ENCODE measurements at regions of chr5 and their contacts with region 1.

Region 1: GRCh38 chr5:157476702-157477408 is 16.8 kb downstream of the NIPAL4 start:
- DNase-seq: peak; percentile 91
- ATAC-seq: peak; percentile 41
- H3K4me3 ChIP-seq: no peak overlapping the region
- H3K27ac ChIP-seq: no peak overlapping the region
- H3K4me1 ChIP-seq: peaks cover 36% of the 10 kb centered on the region
- H3K27me3 ChIP-seq: no peaks in the 10 kb centered on the region
- CTCF ChIP-seq: peak; percentile 99

Region 2: DNA sequence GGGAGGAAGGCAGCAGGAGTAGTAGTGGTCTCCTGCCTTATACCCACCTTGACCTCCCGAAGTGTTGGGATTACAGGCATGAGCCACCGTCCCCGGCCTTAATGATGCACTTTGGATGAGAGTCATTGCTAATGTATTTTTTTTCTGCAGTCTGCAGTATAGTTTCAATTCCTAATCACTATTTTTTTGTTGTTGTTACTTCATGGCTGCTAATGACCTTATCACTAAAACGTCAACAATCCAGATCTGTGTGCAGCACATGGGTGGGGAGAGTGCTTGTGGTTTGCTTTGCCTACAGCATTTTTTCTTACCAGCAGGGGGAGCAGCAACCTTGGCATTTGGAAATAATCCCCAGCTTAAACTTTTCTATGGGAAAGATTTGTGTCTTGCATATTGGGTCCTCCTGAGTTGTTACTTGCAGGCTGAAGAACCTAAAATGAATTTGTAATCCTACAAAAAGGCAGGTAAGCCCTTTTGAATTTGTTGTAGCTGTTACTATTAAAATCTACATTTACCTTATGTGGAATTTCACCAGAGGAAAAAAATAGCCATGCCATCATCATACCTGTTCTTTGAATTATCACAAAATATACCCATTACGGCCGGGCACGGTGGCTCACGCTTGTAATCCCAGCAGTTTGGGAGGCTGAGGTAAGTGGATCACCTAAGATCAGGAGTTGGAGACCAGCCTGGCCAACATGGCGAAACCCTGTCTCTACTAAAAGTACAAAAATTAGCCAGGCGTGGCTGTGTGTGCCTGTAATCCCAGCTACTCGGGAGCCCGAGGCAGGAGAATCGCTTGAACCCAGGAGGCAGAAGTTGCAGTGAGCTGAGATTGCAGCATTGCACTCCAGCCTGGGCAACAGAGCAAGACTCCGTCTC is 327.9 kb before region 1 on chr5:
- CTCF ChIA-PET with region 1: no interaction called
- POLR2A ChIA-PET with region 1: no interaction called
- intact Hi-C with region 1: loop called (anchors 5 kb)
- DNase-seq: peak; percentile 95
- ATAC-seq: peak; percentile 95
- H3K4me3 ChIP-seq: no peak overlapping the region
- H3K27ac ChIP-seq: no peak overlapping the region
- H3K4me1 ChIP-seq: no peaks in the 10 kb centered on the region
- H3K27me3 ChIP-seq: peaks cover 11% of the 10 kb centered on the region; the same call in 1 of the 2 replicates
- CTCF ChIP-seq: peak; percentile 99

Region 3: DNA sequence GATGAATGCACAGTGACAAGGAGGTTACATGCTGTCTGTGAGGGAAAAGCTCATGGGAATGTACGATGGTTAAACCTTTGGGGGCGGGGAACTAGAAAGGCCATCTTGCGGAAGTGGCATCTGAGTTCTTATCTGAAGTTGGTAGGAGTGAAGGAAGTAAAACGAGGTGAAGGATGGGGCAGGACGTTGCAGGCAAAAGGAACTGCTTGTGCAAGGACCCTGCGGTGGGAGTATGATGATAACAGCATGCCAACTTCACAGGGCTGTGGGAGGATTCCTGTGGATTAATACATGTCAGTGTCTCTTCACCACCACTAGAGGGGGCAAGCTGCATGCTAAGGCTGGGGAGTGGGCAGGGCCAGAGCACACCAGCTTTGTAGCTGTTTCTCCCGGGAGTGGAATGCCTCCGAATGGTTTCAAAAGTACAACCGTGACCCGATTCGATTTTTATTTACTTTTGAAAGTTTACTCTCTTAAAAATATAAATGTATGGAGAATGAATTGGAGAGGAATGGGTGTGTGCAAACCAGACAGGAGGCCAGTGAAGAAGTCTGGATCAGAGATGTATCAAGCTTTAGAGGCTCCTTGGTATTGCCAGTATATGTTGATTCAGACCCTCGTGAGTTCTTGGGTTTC is 148.5 kb before region 1 on chr5:
- CTCF ChIA-PET with region 1: interaction called, 32 read pairs
- POLR2A ChIA-PET with region 1: no interaction called
- intact Hi-C with region 1: loop called (anchors 1 kb)
- DNase-seq: peak; percentile 90
- ATAC-seq: peak; percentile 100
- H3K4me3 ChIP-seq: peak overlapping the region; percentile 61
- H3K27ac ChIP-seq: no peak overlapping the region
- H3K4me1 ChIP-seq: peaks cover 13% of the 10 kb centered on the region
- H3K27me3 ChIP-seq: no peaks in the 10 kb centered on the region
- CTCF ChIP-seq: peak; percentile 99

Region 4: DNA sequence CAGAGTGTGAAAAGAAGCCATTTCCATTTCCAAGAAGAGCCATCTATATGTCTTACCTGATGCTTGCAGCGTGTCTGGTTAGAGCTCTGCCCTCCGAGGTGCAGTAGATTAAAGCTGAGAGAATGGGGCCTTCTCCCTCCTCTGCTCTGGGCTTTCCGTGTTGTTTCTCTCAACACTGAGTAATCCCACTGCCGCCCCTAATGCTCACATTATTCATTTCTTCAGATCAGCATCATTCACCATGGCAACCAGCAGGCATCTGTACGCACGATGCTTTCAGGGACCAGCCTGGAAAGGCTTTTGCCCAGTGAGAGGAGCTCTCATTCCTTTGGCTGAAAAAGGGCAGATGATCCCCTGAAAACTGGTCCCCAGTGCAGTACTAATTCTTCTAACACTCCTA is 131.4 kb before region 1 on chr5:
- CTCF ChIA-PET with region 1: interaction called, 6 read pairs
- POLR2A ChIA-PET with region 1: no interaction called
- intact Hi-C with region 1: loop called (anchors 5 kb)
- DNase-seq: no peak
- ATAC-seq: no peak
- H3K4me3 ChIP-seq: no peak overlapping the region
- H3K27ac ChIP-seq: no peak overlapping the region
- H3K4me1 ChIP-seq: no peaks in the 10 kb centered on the region
- H3K27me3 ChIP-seq: no peaks in the 10 kb centered on the region
- CTCF ChIP-seq: no peak

Region 5: GRCh38 chr5:157511651-157512644 is 35.1 kb after region 1 on chr5:
- CTCF ChIA-PET with region 1: no interaction called
- POLR2A ChIA-PET with region 1: no interaction called
- intact Hi-C with region 1: loop called (anchors 2 kb)
- DNase-seq: peak; percentile 99
- ATAC-seq: peak; percentile 93
- H3K4me3 ChIP-seq: peak overlapping the region; percentile 6; the same call in 1 of the 2 replicates
- H3K27ac ChIP-seq: peak overlapping the region; percentile 93
- H3K4me1 ChIP-seq: peaks cover 59% of the 10 kb centered on the region
- H3K27me3 ChIP-seq: no peaks in the 10 kb centered on the region
- CTCF ChIP-seq: no peak

Region 6: GRCh38 chr5:157718519-157718918 is 241.7 kb after region 1 on chr5:
- CTCF ChIA-PET with region 1: interaction called, 9 read pairs
- POLR2A ChIA-PET with region 1: no interaction called
- intact Hi-C with region 1: loop called (anchors 1 kb)
- DNase-seq: peak; percentile 92
- ATAC-seq: peak; percentile 97
- H3K4me3 ChIP-seq: no peak overlapping the region
- H3K27ac ChIP-seq: peak overlapping the region; percentile 58
- H3K4me1 ChIP-seq: peaks cover 20% of the 10 kb centered on the region
- H3K27me3 ChIP-seq: no peaks in the 10 kb centered on the region
- CTCF ChIP-seq: peak; percentile 90

Measured in PC-3 (cell line).